Left colon (tissue), 2 donors: ENCODE measurements at regions of chr2 and their contacts with region 1.

Region 1: GRCh38 chr2:8685697-8686358 is 4.0 kb downstream of the ID2 start:
- DNase-seq: peak; percentile 40 to 78
- ATAC-seq: peak; percentile 34

Region 2: DNA sequence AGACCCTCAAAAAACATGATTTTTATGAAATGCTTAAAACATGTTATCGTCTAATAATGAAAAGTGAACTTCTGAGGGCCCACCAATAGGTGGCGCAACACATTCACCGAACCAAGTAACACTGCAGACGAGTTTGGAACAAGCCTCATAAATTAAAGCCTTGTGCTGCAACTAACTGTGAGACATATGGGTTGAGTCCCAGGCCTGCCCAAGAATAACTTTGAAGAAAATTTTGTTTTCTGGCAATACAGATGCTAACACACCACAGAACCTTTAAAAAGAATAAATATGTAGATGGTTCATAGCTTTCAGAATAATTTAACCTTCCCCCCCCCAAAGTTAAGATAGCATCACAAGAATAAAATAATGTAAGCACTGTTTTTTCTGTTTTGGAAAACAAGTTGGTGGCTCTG is 1482.8 kb before region 1 on chr2:
- intact Hi-C with region 1: loop called in 1 of 2 experiments (anchors 5 kb)
- DNase-seq: peak in 1 of 2 donors; percentile 23
- ATAC-seq: peak; percentile 55

Region 3: DNA sequence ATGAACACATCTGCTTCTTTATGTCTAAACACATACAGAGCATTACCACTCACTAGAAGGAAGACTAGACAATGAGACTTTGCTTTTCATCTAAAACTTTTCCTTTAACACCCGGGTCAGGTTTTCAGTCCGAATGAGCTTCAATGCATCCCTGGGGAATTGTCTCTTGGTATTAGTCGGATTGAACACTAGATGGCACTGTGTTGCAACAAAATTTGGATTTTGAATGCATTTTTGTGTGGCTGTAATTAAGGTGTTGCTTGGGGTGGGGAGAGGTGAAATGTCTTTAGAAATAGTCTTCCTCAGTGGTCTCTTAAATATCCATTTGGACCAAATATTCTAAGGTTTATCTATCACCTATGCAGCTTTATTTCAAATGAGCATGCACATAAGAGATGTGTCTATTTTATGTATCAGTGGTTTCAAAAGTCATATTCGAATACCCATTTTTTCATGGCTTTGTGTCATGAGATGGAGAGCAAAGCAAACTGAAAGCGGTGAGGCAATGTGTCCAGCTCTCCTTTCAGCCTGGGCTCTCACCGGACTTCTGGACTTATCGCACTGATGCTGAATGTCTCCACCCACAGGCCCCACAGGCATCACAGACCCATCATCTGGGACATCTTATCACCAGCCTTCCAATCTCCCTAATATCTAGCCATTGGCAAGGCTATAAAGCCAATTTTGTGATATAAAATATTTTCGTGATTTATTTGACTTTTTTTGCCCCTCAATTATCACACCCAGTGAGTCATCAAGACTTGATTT is 1258.4 kb before region 1 on chr2:
- intact Hi-C with region 1: loop called (anchors 2 to 10 kb)
- DNase-seq: no peak
- ATAC-seq: peak; percentile 53

Region 4: GRCh38 chr2:8567479-8568260 is 118.2 kb before region 1 on chr2:
- intact Hi-C with region 1: no loop called
- DNase-seq: no peak
- ATAC-seq: no peak

Region 5: DNA sequence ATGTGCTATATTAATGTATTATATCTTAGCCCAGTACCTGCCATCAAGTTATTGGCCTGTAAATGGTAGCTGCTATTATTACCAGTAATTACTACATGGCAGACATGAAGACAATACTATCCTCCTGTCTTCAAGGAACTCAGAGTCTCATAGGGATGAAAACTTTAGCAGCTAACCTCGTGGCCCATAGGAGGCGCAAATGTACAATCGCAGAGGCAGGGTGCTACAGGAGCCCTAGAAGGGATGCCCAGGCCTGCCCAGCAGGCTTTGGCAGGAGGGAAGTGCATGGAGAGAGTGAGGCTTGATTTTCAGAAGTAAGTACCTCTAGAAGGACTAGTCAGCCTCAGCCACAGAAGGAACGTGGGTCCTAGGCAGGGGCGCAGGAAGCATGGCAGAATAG is 196.3 kb after region 1 on chr2:
- intact Hi-C with region 1: no loop called
- DNase-seq: peak; percentile 34 to 38
- ATAC-seq: peak; percentile 67